T-cell (primary cell): ENCODE measurements at regions of chr12 and their contacts with region 1.

Region 1: DNA sequence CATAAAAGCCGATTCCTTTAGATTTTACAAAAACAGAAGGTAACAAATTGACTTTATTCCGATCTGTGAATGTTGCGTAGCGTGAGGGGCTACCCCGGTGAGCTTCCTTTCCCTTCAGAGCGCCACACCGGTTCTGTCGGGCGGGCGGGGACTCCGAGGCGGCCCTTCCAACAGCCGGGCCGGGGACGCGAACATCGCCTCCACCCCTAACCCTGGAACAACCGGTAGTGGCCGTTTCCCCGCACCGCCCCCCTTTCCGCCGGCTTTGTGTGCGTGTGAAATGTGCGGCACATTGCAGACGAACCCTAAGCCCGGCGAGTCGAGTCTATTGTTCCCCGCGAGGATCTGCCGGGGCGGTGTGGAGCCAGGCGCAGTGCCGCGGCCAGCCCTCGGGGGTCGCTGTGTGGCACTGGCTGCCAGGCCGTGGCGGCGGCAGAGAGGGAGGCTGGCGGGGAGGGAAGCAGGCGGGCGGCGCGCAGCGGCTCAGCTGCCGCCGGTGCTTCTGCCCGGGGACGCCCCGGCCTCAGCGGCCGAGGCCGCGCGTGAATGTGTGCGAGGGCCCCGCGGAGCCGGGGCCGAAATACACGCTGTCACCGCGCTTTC is 775 bp upstream of the ARID2 start:
- DNase-seq: peak; percentile 95 to 98 (median 97)
- ATAC-seq: peak; percentile 72 to 81 (median 74)
- H3K4me3 ChIP-seq: peak overlapping the region; percentile 90 to 99
- H3K4me3 Mint-ChIP-seq: peak overlapping the region; percentile 85 to 100 (median 95)
- H3K27ac ChIP-seq: peak overlapping the region; percentile 99
- H3K27ac Mint-ChIP-seq: peak overlapping the region; percentile 99
- H3K4me1 ChIP-seq: peaks cover 6 to 41% of the 10 kb centered on the region in 2 experiments
- H3K4me1 Mint-ChIP-seq: peaks cover 30 to 38% (median 32%) of the 10 kb centered on the region in 3 donors
- H3K27me3 ChIP-seq: no peaks in the 10 kb centered on the region
- H3K27me3 Mint-ChIP-seq: no peaks in the 10 kb centered on the region

Region 2: GRCh38 chr12:45543906-45544315 is 184.8 kb before region 1 on chr12:
- CTCF ChIA-PET with region 1: interaction called, 5 to 47 read pairs
- POLR2A ChIA-PET with region 1: no interaction called
- DNase-seq: peak in 30 of 35 experiments; percentile 5 to 81 (median 34)
- ATAC-seq: peak; percentile 58 to 97 (median 76)
- H3K4me3 ChIP-seq: no peak overlapping the region
- H3K4me3 Mint-ChIP-seq: no peak overlapping the region
- H3K27ac ChIP-seq: no peak overlapping the region
- H3K27ac Mint-ChIP-seq: no peak overlapping the region
- H3K4me1 ChIP-seq: no peaks in the 10 kb centered on the region
- H3K4me1 Mint-ChIP-seq: no peaks in the 10 kb centered on the region
- H3K27me3 ChIP-seq: peaks cover 0 to 7% of the 10 kb centered on the region in 2 experiments
- H3K27me3 Mint-ChIP-seq: peaks cover 0 to 3% of the 10 kb centered on the region in 2 donors

Region 3: GRCh38 chr12:45655201-45655600 is 73.5 kb before region 1 on chr12:
- CTCF ChIA-PET with region 1: interaction called, 6 to 61 read pairs
- POLR2A ChIA-PET with region 1: interaction called, 3 read pairs
- DNase-seq: peak; percentile 11 to 80 (median 67)
- ATAC-seq: peak; percentile 99 to 100 (median 100)
- H3K4me3 ChIP-seq: no peak overlapping the region
- H3K4me3 Mint-ChIP-seq: no peak overlapping the region
- H3K27ac ChIP-seq: no peak overlapping the region
- H3K27ac Mint-ChIP-seq: no peak overlapping the region
- H3K4me1 ChIP-seq: peaks cover 0 to 2% of the 10 kb centered on the region in 2 experiments
- H3K4me1 Mint-ChIP-seq: peaks cover 2 to 5% (median 5%) of the 10 kb centered on the region in 3 donors
- H3K27me3 ChIP-seq: peaks cover 0 to 6% of the 10 kb centered on the region in 2 experiments
- H3K27me3 Mint-ChIP-seq: peaks cover 0 to 10% of the 10 kb centered on the region in 2 donors

Region 4: DNA sequence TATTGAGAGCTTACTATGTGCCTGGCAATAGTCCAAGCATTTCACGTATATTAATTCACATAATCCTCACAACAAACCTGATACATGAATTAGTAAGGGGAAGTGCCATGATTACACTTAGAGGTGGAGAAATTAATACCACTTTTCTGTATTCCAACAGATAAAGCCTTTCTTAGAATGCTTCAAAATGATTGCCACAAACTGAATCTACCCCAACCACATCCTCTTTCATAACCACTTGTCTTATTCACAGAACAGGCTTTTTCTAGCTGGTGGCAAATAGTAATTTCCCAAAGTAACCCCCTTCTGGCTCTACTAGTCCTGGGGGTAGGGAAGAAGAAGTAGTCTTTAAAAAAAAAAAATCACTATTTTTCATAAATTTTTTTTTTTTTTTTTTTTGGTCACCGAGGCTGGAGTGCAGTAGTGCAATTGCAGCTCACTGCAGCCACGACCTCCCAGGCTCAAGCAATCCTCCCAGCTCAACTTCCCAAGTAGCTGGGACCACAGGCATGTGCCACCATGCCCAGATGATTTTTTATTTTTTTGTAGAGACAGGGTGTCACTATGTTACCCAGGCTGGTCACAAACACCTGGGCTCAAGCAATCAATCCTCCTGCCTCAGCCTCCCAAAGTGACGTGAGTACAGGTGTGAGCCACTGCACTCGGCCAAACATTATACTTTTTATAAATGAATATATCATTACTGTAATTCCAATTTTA is 58.2 kb before region 1 on chr12:
- CTCF ChIA-PET with region 1: interaction called, 4 to 22 read pairs
- POLR2A ChIA-PET with region 1: interaction called in 1 of 2 experiments, 4 read pairs
- DNase-seq: peak in 5 of 35 experiments; percentile 0 to 63 (median 3)
- ATAC-seq: peak; percentile 61 to 89 (median 82)
- H3K4me3 ChIP-seq: peak overlapping the region in 1 of 2 donors; percentile 38
- H3K4me3 Mint-ChIP-seq: peak overlapping the region in 2 of 3 donors; percentile 21 to 47
- H3K27ac ChIP-seq: peak overlapping the region; percentile 39
- H3K27ac Mint-ChIP-seq: no peak overlapping the region
- H3K4me1 ChIP-seq: peaks cover 15 to 25% of the 10 kb centered on the region in 2 experiments
- H3K4me1 Mint-ChIP-seq: peaks cover 28 to 31% (median 29%) of the 10 kb centered on the region in 3 donors
- H3K27me3 ChIP-seq: no peaks in the 10 kb centered on the region
- H3K27me3 Mint-ChIP-seq: no peaks in the 10 kb centered on the region

Region 5: GRCh38 chr12:45745861-45746277 is 17.1 kb after region 1 on chr12:
- CTCF ChIA-PET with region 1: interaction called, 12 to 109 read pairs
- POLR2A ChIA-PET with region 1: interaction called in 1 of 2 experiments, 5 read pairs
- DNase-seq: peak in 1 of 35 experiments; percentile 37
- ATAC-seq: peak in 3 of 4 experiments; percentile 59 to 78 (median 64)
- H3K4me3 ChIP-seq: no peak overlapping the region
- H3K4me3 Mint-ChIP-seq: no peak overlapping the region
- H3K27ac ChIP-seq: no peak overlapping the region
- H3K27ac Mint-ChIP-seq: no peak overlapping the region
- H3K4me1 ChIP-seq: peaks cover 11 to 16% of the 10 kb centered on the region in 2 experiments
- H3K4me1 Mint-ChIP-seq: peaks cover 65 to 82% (median 66%) of the 10 kb centered on the region in 3 donors
- H3K27me3 ChIP-seq: no peaks in the 10 kb centered on the region
- H3K27me3 Mint-ChIP-seq: no peaks in the 10 kb centered on the region

Region 6: GRCh38 chr12:45775964-45776363 is 47.2 kb after region 1 on chr12:
- CTCF ChIA-PET with region 1: interaction called in 1 of 2 experiments, 3 read pairs
- POLR2A ChIA-PET with region 1: interaction called in 1 of 2 experiments, 10 read pairs
- DNase-seq: no peak
- ATAC-seq: no peak
- H3K4me3 ChIP-seq: no peak overlapping the region
- H3K4me3 Mint-ChIP-seq: no peak overlapping the region
- H3K27ac ChIP-seq: no peak overlapping the region
- H3K27ac Mint-ChIP-seq: no peak overlapping the region
- H3K4me1 ChIP-seq: peaks cover 0 to 6% of the 10 kb centered on the region in 2 experiments
- H3K4me1 Mint-ChIP-seq: peaks cover 40 to 53% (median 43%) of the 10 kb centered on the region in 3 donors
- H3K27me3 ChIP-seq: no peaks in the 10 kb centered on the region
- H3K27me3 Mint-ChIP-seq: no peaks in the 10 kb centered on the region